HepG2 (cell line): ENCODE measurements at regions of chr6 and their contacts with region 1.

Region 1: GRCh38 chr6:131519670-131520436 is 53.2 kb upstream of the ARG1 start:
- DNase-seq: peak; percentile 76
- ATAC-seq: peak; percentile 99
- H3K4me3 ChIP-seq: no peak overlapping the region
- H3K27ac ChIP-seq: no peak overlapping the region
- H3K4me1 ChIP-seq: peaks cover 8% of the 10 kb centered on the region; the same call in 1 of the 2 replicates
- H3K27me3 ChIP-seq: no peaks in the 10 kb centered on the region
- CTCF ChIP-seq: peak; percentile 98
- EP300 ChIP-seq: no peak
- POLR2A ChIP-seq: no peak
- RAD21 ChIP-seq: peak; percentile 88

Region 2: DNA sequence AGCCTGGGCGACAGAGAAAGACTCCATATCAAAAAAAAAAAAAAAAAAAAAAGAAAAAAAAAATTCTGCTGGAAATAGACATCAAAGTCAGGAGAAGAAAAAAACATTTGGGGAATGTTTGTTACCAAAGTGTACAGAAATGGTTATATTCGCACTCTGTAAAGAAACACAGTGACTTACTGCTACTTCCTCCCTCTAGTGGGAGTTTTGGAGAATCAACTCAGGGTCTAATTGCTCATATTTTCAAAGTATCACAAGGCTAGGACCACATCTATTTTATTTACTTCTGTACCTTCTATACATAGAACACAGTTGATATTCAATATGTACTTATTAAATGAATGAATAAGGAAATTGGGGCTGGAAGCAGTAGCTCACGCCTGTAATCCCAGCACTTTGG is 77.6 kb after region 1 on chr6:
- CTCF ChIA-PET with region 1: no interaction called
- POLR2A ChIA-PET with region 1: no interaction called
- in situ Hi-C with region 1: no loop called
- intact Hi-C with region 1: loop called (anchors 1 kb)
- DNase-seq: peak; percentile 30
- ATAC-seq: peak; percentile 93
- H3K4me3 ChIP-seq: no peak overlapping the region
- H3K27ac ChIP-seq: no peak overlapping the region
- H3K4me1 ChIP-seq: no peaks in the 10 kb centered on the region
- H3K27me3 ChIP-seq: no peaks in the 10 kb centered on the region
- CTCF ChIP-seq: peak; percentile 69
- EP300 ChIP-seq: no peak
- POLR2A ChIP-seq: no peak
- RAD21 ChIP-seq: 0 out of 2 replicates have a peak, but pooled peaks have one; percentile 10

Region 3: GRCh38 chr6:131807644-131808459 is 288.0 kb after region 1 on chr6 and contains the start of gene ENPP1:
- CTCF ChIA-PET with region 1: no interaction called
- POLR2A ChIA-PET with region 1: no interaction called
- in situ Hi-C with region 1: no loop called
- intact Hi-C with region 1: no loop called
- DNase-seq: peak; percentile 71
- ATAC-seq: peak; percentile 93
- H3K4me3 ChIP-seq: peak within 1 kb of the TSS; percentile 71 to 94 (median 91)
- H3K27ac ChIP-seq: peak within 1 kb of the TSS; percentile 70
- H3K4me1 ChIP-seq: peaks cover 72% of the 10 kb centered on the region
- H3K27me3 ChIP-seq: no peaks in the 10 kb centered on the region; a peak in 1 of 5 replicates
- CTCF ChIP-seq: peak; percentile 83
- EP300 ChIP-seq: no peak
- POLR2A ChIP-seq: peak; percentile 43 to 84; a peak in 3 of 4 replicates
- RAD21 ChIP-seq: peak; percentile 71
- total RNA-seq, gene ENPP1: 45.8 and 56.5 TPM in 2 replicates